Breast epithelium (tissue), 4 donors: ENCODE measurements at regions of chr12 and their contacts with region 1.

Region 1: DNA sequence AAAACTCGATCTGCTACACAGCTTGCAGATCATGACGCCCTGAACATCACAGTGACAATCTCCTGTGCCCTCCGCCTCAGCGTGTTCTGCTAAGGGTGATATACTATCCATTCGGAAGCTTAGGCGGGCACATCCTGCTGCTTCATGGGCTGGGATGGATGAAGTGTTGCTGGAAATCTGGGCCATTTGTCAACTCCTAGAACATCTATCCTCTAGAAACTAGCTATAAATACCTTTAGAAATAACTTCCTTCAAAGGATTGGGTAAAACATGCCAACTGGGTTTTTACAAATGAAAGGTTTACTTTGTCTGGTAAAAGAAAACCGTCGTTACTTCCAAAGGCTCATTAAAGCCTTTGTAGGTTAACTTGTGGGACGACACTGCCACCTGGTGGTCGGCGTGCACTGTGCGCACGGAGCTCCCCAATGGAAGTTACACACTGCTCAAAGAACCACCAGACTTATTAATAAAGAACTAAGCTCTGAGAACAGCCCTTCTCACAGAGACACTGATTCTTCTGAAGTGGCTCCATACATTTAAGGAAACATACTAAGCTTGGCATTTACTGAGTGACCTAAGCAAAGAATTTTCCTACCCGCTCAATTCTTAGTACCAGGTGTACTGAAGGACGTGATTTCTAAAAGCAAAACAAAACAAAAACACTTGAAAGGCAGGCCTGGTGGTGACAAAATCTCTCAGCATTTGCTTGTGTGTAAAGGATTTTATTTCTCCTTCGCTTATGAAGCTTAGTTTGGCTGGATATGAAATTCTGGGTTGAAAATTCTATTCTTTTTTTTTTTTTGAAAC is 21.6 kb upstream of the CACNA2D4 start:
- DNase-seq: peak; percentile 78 to 89
- H3K4me3 ChIP-seq: no peak overlapping the region
- H3K27ac ChIP-seq: peak overlapping the region in 1 of 2 donors; percentile 6
- H3K4me1 ChIP-seq: no peaks in the 10 kb centered on the region
- H3K27me3 ChIP-seq: no peaks in the 10 kb centered on the region
- CTCF ChIP-seq: peak; percentile 95 to 98 (median 97)
- POLR2A ChIP-seq: no peak

Region 2: DNA sequence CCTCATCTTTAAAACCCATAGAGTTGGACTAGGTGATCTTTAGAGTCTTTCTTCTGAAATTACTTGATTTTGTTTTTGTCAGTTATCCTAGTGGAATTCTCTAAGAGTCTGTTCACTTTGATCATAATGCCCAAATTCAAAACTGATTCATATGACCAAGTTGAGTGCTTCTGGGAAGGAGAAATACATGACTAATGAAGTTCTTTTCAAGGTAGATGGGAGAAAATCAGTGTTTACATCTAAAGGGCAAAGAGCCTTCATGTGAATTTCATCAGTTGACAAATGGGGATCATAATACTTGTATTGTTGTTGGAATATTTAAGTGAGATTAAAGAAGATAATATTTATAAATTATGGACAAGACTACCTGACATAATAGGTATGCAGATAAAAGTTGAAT is 895.8 kb before region 1 on chr12:
- intact Hi-C with region 1: no loop called
- DNase-seq: no peak
- H3K4me3 ChIP-seq: no peak overlapping the region
- H3K27ac ChIP-seq: no peak overlapping the region
- H3K4me1 ChIP-seq: peaks cover 0 to 6% of the 10 kb centered on the region in 2 donors
- H3K27me3 ChIP-seq: no peaks in the 10 kb centered on the region
- CTCF ChIP-seq: no peak
- POLR2A ChIP-seq: no peak

Region 3: DNA sequence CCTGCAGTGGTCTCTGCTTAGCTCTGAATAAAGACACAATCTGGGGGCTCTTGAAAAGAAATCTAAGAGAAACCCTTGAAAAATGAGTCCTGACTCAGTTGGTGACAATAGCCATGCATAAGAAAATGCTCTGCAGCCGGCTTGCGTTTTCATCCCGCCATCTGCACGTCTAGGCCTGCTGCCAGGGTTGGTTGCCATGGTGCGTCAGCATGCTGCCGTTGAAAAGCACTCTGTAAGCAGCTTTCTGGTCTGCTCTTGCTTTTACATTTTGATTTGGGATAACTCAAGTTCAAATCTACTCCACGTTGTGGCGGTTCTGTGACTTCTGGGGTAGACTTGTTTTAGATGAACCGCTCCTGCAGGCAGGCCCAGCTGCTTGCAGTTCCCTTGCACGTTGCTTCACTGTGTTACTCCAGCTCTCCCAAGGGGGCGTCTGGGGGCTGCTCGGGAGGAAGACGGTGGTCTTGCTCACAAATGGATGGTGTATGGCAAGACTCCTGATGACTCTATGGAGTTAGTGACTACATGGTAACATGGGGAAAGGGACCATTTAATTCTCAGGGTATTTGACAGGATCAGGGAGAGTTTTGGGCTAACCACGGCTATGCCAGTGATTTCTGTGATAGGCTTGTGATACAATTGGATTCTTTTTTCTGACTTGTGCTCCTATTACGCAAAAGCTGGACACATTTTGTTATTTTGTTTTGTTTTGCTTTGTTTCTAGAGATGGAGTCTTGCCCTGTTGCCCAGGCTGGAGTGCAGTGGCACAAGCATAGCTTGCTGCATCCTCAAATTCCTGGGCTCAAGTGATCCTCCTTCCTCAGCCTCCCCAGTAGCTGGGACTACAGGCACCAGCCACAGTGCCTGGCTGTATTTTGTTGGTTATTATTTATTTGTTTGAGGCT is 295.2 kb before region 1 on chr12:
- intact Hi-C with region 1: loop called (anchors 10 kb)
- DNase-seq: peak in 1 of 2 donors; percentile 76
- H3K4me3 ChIP-seq: no peak overlapping the region
- H3K27ac ChIP-seq: no peak overlapping the region
- H3K4me1 ChIP-seq: peaks cover 0 to 4% of the 10 kb centered on the region in 2 donors
- H3K27me3 ChIP-seq: no peaks in the 10 kb centered on the region
- CTCF ChIP-seq: no peak
- POLR2A ChIP-seq: no peak

Region 4: GRCh38 chr12:2013527-2014223 is 73.7 kb after region 1 on chr12:
- intact Hi-C with region 1: no loop called
- DNase-seq: no peak
- H3K4me3 ChIP-seq: no peak overlapping the region
- H3K27ac ChIP-seq: peak overlapping the region in 1 of 2 donors; percentile 25
- H3K4me1 ChIP-seq: no peaks in the 10 kb centered on the region
- H3K27me3 ChIP-seq: no peaks in the 10 kb centered on the region
- CTCF ChIP-seq: no peak
- POLR2A ChIP-seq: no peak